Esophagus muscularis mucosa (tissue), 4 donors: ENCODE measurements at regions of chr1 and their contacts with region 1.

Region 1: DNA sequence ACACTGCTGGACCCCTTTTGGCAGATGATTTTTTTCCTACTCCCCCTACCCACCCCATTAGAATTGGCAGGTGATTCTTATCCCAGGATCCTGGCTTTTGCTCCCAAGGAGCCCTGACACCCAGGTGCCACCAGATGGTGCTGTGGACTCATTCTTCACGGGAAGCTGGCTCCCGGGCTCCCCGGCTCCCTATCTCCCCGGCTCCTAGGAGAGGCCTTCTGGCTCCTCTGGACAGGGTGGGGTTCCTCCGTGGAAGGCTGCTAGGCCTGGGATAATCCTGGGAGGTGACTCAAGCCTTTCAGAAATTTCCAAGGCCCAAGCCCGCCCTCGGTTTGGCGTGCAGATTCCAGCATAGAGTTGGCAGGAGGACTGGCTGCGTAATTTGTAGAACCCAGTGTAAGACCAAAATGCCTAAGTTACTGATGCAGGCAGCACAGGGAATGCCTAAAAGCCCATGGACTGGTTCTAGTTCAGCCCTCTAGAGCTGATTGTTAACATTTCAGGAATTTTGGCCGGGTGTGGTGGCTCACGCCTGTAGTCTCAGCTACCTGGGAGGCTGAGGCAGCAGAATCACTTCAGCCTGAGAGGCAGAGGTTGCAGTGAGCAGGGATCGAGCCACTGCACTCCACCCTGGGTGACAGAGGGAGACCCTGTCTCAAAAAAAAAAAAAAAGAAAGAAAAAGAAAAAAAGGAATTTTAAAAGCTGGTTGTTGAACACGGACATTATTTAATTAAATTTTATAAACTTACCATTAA is 6.8 kb upstream of the BSDC1 start:
- DNase-seq: peak; percentile 94
- H3K4me3 ChIP-seq: peak overlapping the region in 1 of 4 donors; percentile 16
- H3K27ac ChIP-seq: peak overlapping the region; percentile 52 to 69 (median 66)
- H3K4me1 ChIP-seq: peaks cover 4 to 8% (median 4%) of the 10 kb centered on the region in 4 donors
- H3K27me3 ChIP-seq: no peaks in the 10 kb centered on the region
- CTCF ChIP-seq: peak; percentile 84 to 96 (median 92)
- EP300 ChIP-seq: no peak
- POLR2A ChIP-seq: no peak

Region 2: DNA sequence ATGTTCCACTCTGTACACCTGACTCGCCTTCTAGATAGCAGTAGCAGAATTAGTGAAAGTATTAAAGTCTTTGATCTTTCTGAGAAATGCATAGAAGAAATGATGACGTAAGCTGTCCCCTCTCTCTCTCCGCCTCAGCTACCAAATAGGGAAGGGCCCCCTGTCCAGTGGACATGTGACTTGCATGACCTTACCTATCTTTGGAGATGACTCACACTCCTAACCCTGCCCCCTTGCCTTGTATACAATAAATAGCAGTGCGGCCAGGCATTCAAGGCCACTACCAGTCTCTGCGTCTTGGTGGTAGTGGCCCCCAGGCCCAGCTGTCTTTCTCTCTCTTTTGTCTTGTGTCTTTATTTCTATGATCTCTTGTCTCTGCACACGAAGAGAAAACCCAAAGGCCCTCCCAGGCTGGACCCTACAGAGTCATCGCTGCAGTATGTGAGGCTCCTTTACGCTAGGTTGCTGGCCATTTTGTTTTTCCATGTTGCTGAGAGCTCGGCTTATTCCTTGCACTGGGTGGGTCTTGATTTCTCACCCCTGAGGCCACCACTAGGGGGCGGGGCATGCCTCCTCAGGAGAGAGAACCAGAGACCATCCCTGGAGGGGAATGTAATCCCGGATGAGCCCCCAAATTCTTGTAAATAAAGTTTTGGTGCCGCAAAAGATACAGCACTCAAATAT is 47.9 kb after region 1 on chr1:
- intact Hi-C with region 1: loop called (anchors 5 kb)
- DNase-seq: no peak
- H3K4me3 ChIP-seq: no peak overlapping the region
- H3K27ac ChIP-seq: no peak overlapping the region
- H3K4me1 ChIP-seq: peaks cover 3 to 12% (median 8%) of the 10 kb centered on the region in 4 donors
- H3K27me3 ChIP-seq: no peaks in the 10 kb centered on the region
- CTCF ChIP-seq: peak in 1 of 3 experiments; percentile 30
- EP300 ChIP-seq: no peak
- POLR2A ChIP-seq: no peak